ENCODE measurements at regions of chr6 and their contacts with region 1.

Region 1: GRCh38 chr6:142146828-142147662 is at the starts of genes NMBR and VTA1:
- DNase-seq: peak; percentile 81 to 98 (median 97)
- ATAC-seq: peak; percentile 99
- H3K4me3 ChIP-seq: peak within 1 kb of the TSS; percentile 95
- H3K4me3 Mint-ChIP-seq: peak within 1 kb of the TSS; percentile 88 to 98 (median 95)
- H3K27ac ChIP-seq: peak within 1 kb of the TSS; percentile 75
- H3K27ac Mint-ChIP-seq: peak within 1 kb of the TSS; percentile 80 to 98 (median 94)
- H3K4me1 ChIP-seq: peaks cover 22 to 25% of the 10 kb centered on the region in 2 donors
- H3K4me1 Mint-ChIP-seq: peaks cover 36 to 73% (median 65%) of the 10 kb centered on the region in 7 donors
- H3K27me3 ChIP-seq: no peaks in the 10 kb centered on the region
- H3K27me3 Mint-ChIP-seq: peaks cover 0 to 2% (median 0%) of the 10 kb centered on the region in 5 donors
- total RNA-seq, gene NMBR: not detected
- total RNA-seq, gene VTA1: 13.6 to 41.3 (median 32.6) TPM

Region 2: DNA sequence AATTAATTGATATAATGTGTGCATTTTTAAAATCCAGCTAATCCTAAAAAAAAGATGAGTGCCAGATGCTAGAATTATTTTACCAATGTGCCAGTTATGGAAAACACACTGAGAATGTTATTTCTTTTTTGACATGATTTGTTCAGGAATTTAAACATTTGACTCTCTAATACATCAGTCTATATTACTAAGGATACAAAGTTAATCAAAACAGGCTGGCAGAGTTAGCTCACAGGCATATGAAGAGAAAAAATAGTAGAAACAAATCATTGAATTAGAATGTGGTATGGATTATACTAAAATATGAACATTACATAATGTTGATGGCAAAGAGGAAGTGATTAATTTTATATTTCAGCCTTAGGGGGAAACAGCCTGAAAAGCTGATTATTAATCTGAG is 382.7 kb before region 1 on chr6:
- CTCF ChIA-PET with region 1: no interaction called
- POLR2A ChIA-PET with region 1: no interaction called
- intact Hi-C with region 1: no loop called
- DNase-seq: no peak
- ATAC-seq: no peak
- H3K4me3 ChIP-seq: no peak overlapping the region
- H3K4me3 Mint-ChIP-seq: no peak overlapping the region
- H3K27ac ChIP-seq: no peak overlapping the region
- H3K27ac Mint-ChIP-seq: no peak overlapping the region
- H3K4me1 ChIP-seq: no peaks in the 10 kb centered on the region
- H3K4me1 Mint-ChIP-seq: no peaks in the 10 kb centered on the region
- H3K27me3 ChIP-seq: no peaks in the 10 kb centered on the region
- H3K27me3 Mint-ChIP-seq: peaks cover 0 to 5% (median 0%) of the 10 kb centered on the region in 5 donors

Region 3: GRCh38 chr6:141874930-141875602 is 272.0 kb before region 1 on chr6:
- CTCF ChIA-PET with region 1: no interaction called
- POLR2A ChIA-PET with region 1: no interaction called
- intact Hi-C with region 1: no loop called
- DNase-seq: no peak
- ATAC-seq: no peak
- H3K4me3 ChIP-seq: no peak overlapping the region
- H3K4me3 Mint-ChIP-seq: no peak overlapping the region
- H3K27ac ChIP-seq: no peak overlapping the region
- H3K27ac Mint-ChIP-seq: no peak overlapping the region
- H3K4me1 ChIP-seq: no peaks in the 10 kb centered on the region
- H3K4me1 Mint-ChIP-seq: no peaks in the 10 kb centered on the region
- H3K27me3 ChIP-seq: no peaks in the 10 kb centered on the region
- H3K27me3 Mint-ChIP-seq: no peaks in the 10 kb centered on the region

Region 4: GRCh38 chr6:141925001-141925400 is 222.0 kb before region 1 on chr6:
- CTCF ChIA-PET with region 1: no interaction called
- POLR2A ChIA-PET with region 1: no interaction called
- intact Hi-C with region 1: no loop called
- DNase-seq: no peak
- ATAC-seq: no peak
- H3K4me3 ChIP-seq: no peak overlapping the region
- H3K4me3 Mint-ChIP-seq: no peak overlapping the region
- H3K27ac ChIP-seq: no peak overlapping the region
- H3K27ac Mint-ChIP-seq: no peak overlapping the region
- H3K4me1 ChIP-seq: no peaks in the 10 kb centered on the region
- H3K4me1 Mint-ChIP-seq: no peaks in the 10 kb centered on the region
- H3K27me3 ChIP-seq: no peaks in the 10 kb centered on the region
- H3K27me3 Mint-ChIP-seq: no peaks in the 10 kb centered on the region

Region 5: DNA sequence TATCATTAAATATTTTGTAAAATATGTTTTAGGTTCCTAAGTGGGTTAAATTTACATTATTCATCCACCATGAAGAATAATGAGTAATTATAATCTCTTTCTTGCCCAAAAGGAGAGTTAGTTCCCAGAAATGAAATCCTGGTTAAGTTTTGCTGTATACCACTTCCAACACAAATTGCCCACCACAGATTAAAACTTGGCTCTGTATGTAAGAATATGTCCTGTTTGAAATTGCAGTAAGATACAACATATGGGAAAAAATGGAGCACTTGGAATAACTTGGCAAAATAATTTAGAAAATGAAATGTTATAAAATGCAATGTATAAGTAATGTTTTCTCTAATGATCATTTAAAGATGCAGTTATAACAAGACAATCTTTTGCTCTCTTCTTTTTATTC is 78.6 kb before region 1 on chr6:
- CTCF ChIA-PET with region 1: no interaction called
- POLR2A ChIA-PET with region 1: no interaction called
- intact Hi-C with region 1: no loop called
- DNase-seq: no peak
- ATAC-seq: no peak
- H3K4me3 ChIP-seq: no peak overlapping the region
- H3K4me3 Mint-ChIP-seq: no peak overlapping the region
- H3K27ac ChIP-seq: no peak overlapping the region
- H3K27ac Mint-ChIP-seq: no peak overlapping the region
- H3K4me1 ChIP-seq: no peaks in the 10 kb centered on the region
- H3K4me1 Mint-ChIP-seq: peaks cover 0 to 2% (median 0%) of the 10 kb centered on the region in 7 donors
- H3K27me3 ChIP-seq: no peaks in the 10 kb centered on the region
- H3K27me3 Mint-ChIP-seq: peaks cover 0 to 36% (median 30%) of the 10 kb centered on the region in 5 donors

Region 6: GRCh38 chr6:142207265-142207877 is 60.3 kb after region 1 on chr6:
- CTCF ChIA-PET with region 1: interaction called, 7 read pairs
- POLR2A ChIA-PET with region 1: interaction called, 3 read pairs
- intact Hi-C with region 1: loop called (anchors 1 kb)
- DNase-seq: peak in 8 of 9 donors; percentile 23 to 46 (median 37)
- ATAC-seq: peak; percentile 63
- H3K4me3 ChIP-seq: no peak overlapping the region
- H3K4me3 Mint-ChIP-seq: no peak overlapping the region
- H3K27ac ChIP-seq: no peak overlapping the region
- H3K27ac Mint-ChIP-seq: peak overlapping the region in 6 of 9 donors; percentile 13 to 81 (median 30)
- H3K4me1 ChIP-seq: no peaks in the 10 kb centered on the region
- H3K4me1 Mint-ChIP-seq: peaks cover 0 to 6% (median 2%) of the 10 kb centered on the region in 7 donors
- H3K27me3 ChIP-seq: no peaks in the 10 kb centered on the region
- H3K27me3 Mint-ChIP-seq: no peaks in the 10 kb centered on the region

Region 7: DNA sequence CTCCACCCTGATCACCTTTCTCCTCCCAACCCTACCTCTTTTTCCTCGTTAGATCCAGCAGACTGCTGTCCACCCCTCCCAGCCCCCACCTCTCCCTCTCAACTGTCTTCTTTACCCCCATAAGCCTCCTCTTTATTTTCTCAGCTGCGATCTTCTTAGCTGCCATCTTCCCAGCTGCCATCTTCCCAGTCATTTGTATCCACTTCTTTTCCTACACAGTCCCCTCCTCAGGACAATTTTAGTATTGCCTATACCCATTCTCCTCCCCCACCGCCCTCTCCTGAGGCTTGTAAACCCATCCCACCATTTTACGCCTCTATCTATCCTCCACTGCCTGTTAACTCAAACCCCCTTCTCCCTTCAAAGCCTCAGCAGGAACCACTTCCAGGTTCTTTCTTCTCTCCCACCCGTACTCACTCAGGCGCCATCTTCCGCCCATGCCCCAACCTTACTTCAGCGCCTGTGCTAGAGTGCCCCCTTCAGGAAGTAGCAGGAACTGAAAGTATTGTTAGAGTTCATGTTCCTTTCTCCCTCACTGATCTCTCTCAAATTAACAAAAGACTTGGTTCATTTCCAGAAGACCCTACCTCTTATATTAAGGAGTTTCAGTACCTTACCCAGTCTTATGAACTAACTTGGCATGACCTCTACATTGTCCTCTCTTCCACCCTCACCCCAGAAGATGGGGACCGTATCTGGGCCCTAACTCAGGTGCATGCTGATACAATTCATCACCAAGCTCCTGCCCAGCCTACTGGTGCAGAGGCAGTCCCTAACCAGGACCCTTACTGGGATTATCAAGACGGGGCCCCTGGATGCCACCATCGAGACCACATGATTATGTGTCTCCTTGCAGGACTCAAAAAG is 390.8 kb after region 1 on chr6:
- CTCF ChIA-PET with region 1: no interaction called
- POLR2A ChIA-PET with region 1: no interaction called
- intact Hi-C with region 1: loop called (anchors 1 to 5 kb)
- DNase-seq: peak in 2 of 9 donors; percentile 11 to 22
- ATAC-seq: no peak
- H3K4me3 ChIP-seq: no peak overlapping the region
- H3K4me3 Mint-ChIP-seq: no peak overlapping the region
- H3K27ac ChIP-seq: no peak overlapping the region
- H3K27ac Mint-ChIP-seq: peak overlapping the region in 1 of 9 donors; percentile 32
- H3K4me1 ChIP-seq: no peaks in the 10 kb centered on the region
- H3K4me1 Mint-ChIP-seq: peaks cover 0 to 13% (median 0%) of the 10 kb centered on the region in 7 donors
- H3K27me3 ChIP-seq: no peaks in the 10 kb centered on the region
- H3K27me3 Mint-ChIP-seq: no peaks in the 10 kb centered on the region

Region 8: DNA sequence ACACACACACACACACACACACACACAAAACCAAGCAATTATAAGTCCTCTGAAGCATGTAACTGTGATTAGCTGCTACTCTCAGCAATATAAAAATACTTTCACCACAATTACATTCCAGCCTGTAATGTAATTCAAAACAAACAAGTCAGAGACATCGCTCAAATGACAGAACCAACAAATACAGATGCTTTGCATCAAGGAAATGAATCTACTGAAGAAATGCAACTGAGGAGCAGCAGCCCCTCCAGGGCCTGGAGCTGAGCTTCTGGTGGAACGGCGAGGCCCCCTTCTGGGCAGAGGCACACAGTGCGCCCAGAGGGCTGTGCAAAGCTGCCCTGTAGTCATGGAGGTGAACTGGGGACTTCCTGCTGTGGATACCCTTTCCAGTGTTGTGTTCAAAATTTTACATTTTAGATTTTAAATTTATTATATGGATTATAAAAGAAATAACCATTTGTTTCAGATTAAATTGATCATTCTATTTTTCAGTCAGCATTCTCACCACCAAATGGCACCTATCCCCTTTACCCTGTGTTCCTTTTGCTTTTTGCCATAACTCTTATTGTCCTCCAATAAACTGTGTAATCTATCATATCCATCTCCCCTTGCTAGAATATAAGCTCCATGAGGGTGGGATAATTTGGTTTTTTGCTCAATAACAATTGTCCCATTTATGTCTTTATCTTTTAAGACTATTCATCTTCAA is 1280.2 kb after region 1 on chr6:
- CTCF ChIA-PET with region 1: no interaction called
- POLR2A ChIA-PET with region 1: no interaction called
- intact Hi-C with region 1: loop called in 1 of 2 experiments (anchors 2 kb)
- DNase-seq: peak; percentile 53 to 80 (median 73)
- ATAC-seq: peak; percentile 99
- H3K4me3 ChIP-seq: no peak overlapping the region
- H3K4me3 Mint-ChIP-seq: no peak overlapping the region
- H3K27ac ChIP-seq: no peak overlapping the region
- H3K27ac Mint-ChIP-seq: peak overlapping the region in 3 of 9 donors; percentile 25 to 75 (median 28)
- H3K4me1 ChIP-seq: no peaks in the 10 kb centered on the region
- H3K4me1 Mint-ChIP-seq: peaks cover 0 to 5% (median 0%) of the 10 kb centered on the region in 7 donors
- H3K27me3 ChIP-seq: no peaks in the 10 kb centered on the region
- H3K27me3 Mint-ChIP-seq: no peaks in the 10 kb centered on the region

Region 9: GRCh38 chr6:144013486-144013909 is 1866.5 kb after region 1 on chr6:
- CTCF ChIA-PET with region 1: interaction called, 3 read pairs
- POLR2A ChIA-PET with region 1: no interaction called
- intact Hi-C with region 1: loop called in 1 of 2 experiments (anchors 10 kb)
- DNase-seq: peak; percentile 18 to 58 (median 45)
- ATAC-seq: peak; percentile 54
- H3K4me3 ChIP-seq: no peak overlapping the region
- H3K4me3 Mint-ChIP-seq: no peak overlapping the region
- H3K27ac ChIP-seq: no peak overlapping the region
- H3K27ac Mint-ChIP-seq: peak overlapping the region in 1 of 9 donors; percentile 9
- H3K4me1 ChIP-seq: no peaks in the 10 kb centered on the region
- H3K4me1 Mint-ChIP-seq: peaks cover 0 to 4% (median 0%) of the 10 kb centered on the region in 7 donors
- H3K27me3 ChIP-seq: peaks cover 0 to 6% of the 10 kb centered on the region in 2 donors
- H3K27me3 Mint-ChIP-seq: peaks cover 11 to 45% (median 28%) of the 10 kb centered on the region in 5 donors

Measured in naive thymus-derived CD4-positive, alpha-beta T cell (primary cell).